Activated CD4-positive, alpha-beta T cell treated with anti-CD3 and anti-CD28 coated beads for 36 hours (primary cell): ENCODE measurements at regions of chrX and their contacts with region 1.

Region 1: DNA sequence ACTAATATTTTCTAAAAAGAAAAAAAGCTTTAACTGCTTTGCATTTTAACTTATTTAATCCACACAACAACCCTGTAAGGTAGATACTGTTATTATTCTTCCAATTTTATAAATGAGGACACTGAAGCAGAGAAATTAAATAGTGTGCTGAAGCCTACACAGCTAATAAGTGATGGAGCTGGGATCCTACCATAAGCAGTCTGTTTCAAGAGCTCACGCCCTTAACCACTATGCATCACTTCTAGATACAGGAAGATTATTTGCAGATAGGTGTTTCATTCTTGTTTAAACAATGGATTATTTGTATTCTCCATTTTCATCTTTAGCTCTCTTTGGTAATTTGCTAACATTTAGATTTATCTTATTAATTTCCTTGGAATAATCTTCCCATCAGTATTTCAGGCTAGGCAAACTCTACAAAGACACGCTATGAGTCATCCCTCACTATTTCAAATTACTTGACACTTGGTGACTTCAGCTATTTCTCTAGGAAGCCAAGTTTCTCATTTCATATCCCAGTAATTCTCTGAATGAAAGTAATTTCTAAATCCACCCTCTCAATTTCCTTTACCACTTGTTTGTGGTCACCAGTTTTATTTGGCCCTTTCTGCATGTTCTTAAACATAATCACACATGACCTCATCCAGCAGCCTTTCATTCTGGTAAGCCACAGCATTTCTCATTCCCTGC is 67.3 kb downstream of the ASB9 start:
- DNase-seq: no peak
- ATAC-seq: peak; percentile 45
- H3K4me3 Mint-ChIP-seq: no peak overlapping the region
- H3K27ac Mint-ChIP-seq: no peak overlapping the region
- H3K4me1 Mint-ChIP-seq: peaks cover 42% of the 10 kb centered on the region
- H3K27me3 Mint-ChIP-seq: peaks cover 8% of the 10 kb centered on the region

Region 2: DNA sequence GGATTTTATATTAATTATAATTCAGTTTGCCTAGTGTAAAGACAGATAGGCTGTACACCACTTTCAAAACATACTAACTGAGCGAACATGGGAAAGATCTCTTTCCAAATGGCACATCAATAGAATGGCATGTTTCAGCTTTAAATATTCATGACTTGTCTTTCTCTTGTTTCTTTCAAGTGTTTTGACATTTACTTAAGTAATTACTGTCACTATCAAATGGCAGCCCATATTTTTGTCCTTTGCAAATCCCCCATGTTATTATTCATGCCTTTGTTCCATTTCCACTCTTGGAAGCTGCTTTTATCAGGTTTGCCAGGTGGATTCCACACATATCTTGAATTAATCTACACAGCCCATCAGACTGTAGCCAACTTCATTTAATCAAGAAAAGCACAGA is 762.5 kb before region 1 on chrX:
- CTCF ChIA-PET with region 1: no interaction called
- POLR2A ChIA-PET with region 1: no interaction called
- intact Hi-C with region 1: no loop called
- DNase-seq: no peak
- ATAC-seq: no peak
- H3K4me3 Mint-ChIP-seq: no peak overlapping the region
- H3K27ac Mint-ChIP-seq: no peak overlapping the region
- H3K4me1 Mint-ChIP-seq: no peaks in the 10 kb centered on the region
- H3K27me3 Mint-ChIP-seq: peaks cover 3% of the 10 kb centered on the region

Region 3: GRCh38 chrX:14497184-14497666 is 705.4 kb before region 1 on chrX:
- CTCF ChIA-PET with region 1: no interaction called
- POLR2A ChIA-PET with region 1: no interaction called
- intact Hi-C with region 1: loop called in 1 of 2 experiments (anchors 5 kb)
- DNase-seq: peak; percentile 16
- ATAC-seq: peak; percentile 80
- H3K4me3 Mint-ChIP-seq: peak overlapping the region; percentile 70
- H3K27ac Mint-ChIP-seq: peak overlapping the region; percentile 91
- H3K4me1 Mint-ChIP-seq: peaks cover 19% of the 10 kb centered on the region
- H3K27me3 Mint-ChIP-seq: no peaks in the 10 kb centered on the region

Region 4: DNA sequence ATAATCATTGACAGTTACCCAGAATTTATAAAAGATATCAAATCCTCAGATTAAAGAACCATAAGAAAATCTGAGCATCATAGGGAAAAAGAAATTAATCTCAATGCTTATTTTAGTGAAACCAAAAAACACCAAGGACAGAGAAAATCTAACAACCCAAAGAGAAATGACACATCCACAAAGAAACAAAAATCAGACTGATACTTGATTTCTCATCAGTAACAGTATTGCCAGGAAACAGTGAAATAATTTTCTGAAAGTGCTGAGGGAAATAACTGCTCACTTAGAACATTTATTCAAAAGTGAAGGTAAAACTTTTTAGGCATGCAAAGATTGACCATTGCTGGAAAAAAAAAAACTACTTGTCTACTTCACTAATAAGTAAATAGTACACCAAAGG is 318.8 kb before region 1 on chrX:
- CTCF ChIA-PET with region 1: no interaction called
- POLR2A ChIA-PET with region 1: no interaction called
- intact Hi-C with region 1: loop called (anchors 5 kb)
- DNase-seq: no peak
- ATAC-seq: peak; percentile 57
- H3K4me3 Mint-ChIP-seq: peak overlapping the region; percentile 35
- H3K27ac Mint-ChIP-seq: peak overlapping the region; percentile 93
- H3K4me1 Mint-ChIP-seq: peaks cover 48% of the 10 kb centered on the region
- H3K27me3 Mint-ChIP-seq: no peaks in the 10 kb centered on the region

Region 5: GRCh38 chrX:15033917-15034316 is 168.7 kb before region 1 on chrX:
- CTCF ChIA-PET with region 1: no interaction called
- POLR2A ChIA-PET with region 1: no interaction called
- intact Hi-C with region 1: loop called in 1 of 2 experiments (anchors 10 kb)
- DNase-seq: no peak
- ATAC-seq: peak; percentile 77
- H3K4me3 Mint-ChIP-seq: no peak overlapping the region
- H3K27ac Mint-ChIP-seq: no peak overlapping the region
- H3K4me1 Mint-ChIP-seq: peaks cover 9% of the 10 kb centered on the region
- H3K27me3 Mint-ChIP-seq: no peaks in the 10 kb centered on the region

Region 6: GRCh38 chrX:15151267-15152186 is 51.1 kb before region 1 on chrX:
- CTCF ChIA-PET with region 1: interaction called, 5 read pairs
- POLR2A ChIA-PET with region 1: no interaction called
- intact Hi-C with region 1: loop called (anchors 2 kb)
- DNase-seq: peak; percentile 56
- ATAC-seq: peak; percentile 92
- H3K4me3 Mint-ChIP-seq: no peak overlapping the region
- H3K27ac Mint-ChIP-seq: peak overlapping the region; percentile 70
- H3K4me1 Mint-ChIP-seq: peaks cover 16% of the 10 kb centered on the region
- H3K27me3 Mint-ChIP-seq: peaks cover 14% of the 10 kb centered on the region

Region 7: DNA sequence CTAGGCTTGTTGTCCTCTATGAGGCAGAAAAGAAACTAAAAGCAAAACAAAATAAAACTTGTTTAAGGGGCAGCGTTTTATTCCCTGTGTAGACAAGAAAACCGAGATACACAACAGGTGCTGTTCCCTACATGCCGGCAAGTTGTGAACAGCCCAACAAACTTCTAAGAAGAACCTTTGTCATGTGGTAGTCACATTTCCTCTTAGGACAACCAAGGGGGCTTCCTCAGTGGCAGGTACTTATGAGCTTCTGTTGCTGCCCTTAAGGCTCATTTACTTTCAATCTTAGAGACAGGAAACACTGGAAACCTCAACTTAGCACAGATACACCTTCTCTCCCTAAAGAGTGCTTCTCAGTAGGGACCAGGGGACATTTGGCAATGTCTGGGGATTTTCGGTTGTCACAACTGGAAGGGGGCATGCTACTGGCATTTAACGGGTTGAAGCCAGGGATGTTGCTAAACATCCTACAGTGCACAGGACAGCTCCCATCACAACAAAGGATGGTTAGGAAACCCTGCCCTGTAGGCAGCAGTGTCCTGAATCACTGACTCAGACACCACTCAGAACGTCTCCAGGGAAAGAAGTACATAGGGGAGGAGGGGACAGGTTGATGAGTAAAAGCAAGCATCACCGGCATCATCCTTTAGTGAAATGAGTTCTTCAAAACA is 43.7 kb before region 1 on chrX:
- CTCF ChIA-PET with region 1: no interaction called
- POLR2A ChIA-PET with region 1: no interaction called
- intact Hi-C with region 1: loop called (anchors 1 kb)
- DNase-seq: peak; percentile 44
- ATAC-seq: peak; percentile 96
- H3K4me3 Mint-ChIP-seq: peak overlapping the region; percentile 34
- H3K27ac Mint-ChIP-seq: peak overlapping the region; percentile 69
- H3K4me1 Mint-ChIP-seq: peaks cover 20% of the 10 kb centered on the region
- H3K27me3 Mint-ChIP-seq: peaks cover 7% of the 10 kb centered on the region